Spleen (tissue), 13 donors: ENCODE measurements at regions of chr3 and their contacts with region 1.

Region 1: GRCh38 chr3:131502530-131503245 is at the start of gene MRPL3:
- DNase-seq: peak; percentile 96
- H3K4me3 ChIP-seq: peak within 1 kb of the TSS; percentile 55 to 100 (median 82)
- H3K27ac ChIP-seq: peak within 1 kb of the TSS; percentile 52 to 88 (median 76)
- H3K4me1 ChIP-seq: peaks cover 15 to 49% (median 37%) of the 10 kb centered on the region in 6 donors
- H3K27me3 ChIP-seq: peaks cover 0 to 2% (median 0%) of the 10 kb centered on the region in 7 donors
- CTCF ChIP-seq: no peak
- POLR2A ChIP-seq: no peak
- total RNA-seq, gene MRPL3: 39.9 to 60.2 (median 52.7) TPM

Region 2: DNA sequence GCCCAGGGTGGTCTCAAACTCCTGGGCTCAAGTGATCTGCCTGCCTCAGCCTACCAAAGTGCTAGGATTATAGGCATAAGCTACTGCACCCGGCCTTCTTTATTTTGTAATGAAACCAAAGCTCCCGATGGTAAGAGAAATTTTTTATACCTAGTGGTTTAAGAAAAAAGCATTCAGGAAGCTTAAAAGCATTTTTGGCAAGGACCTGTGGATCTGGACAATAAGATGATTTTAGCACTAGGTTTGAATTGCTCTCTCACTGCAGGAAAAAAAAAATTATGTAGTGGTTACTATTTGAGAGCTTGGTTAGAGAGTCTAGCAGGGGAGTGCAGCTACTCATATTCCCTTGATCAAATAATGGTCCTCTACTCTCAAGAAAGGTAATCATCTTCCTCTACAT is 691.1 kb before region 1 on chr3:
- intact Hi-C with region 1: no loop called
- DNase-seq: no peak
- H3K4me3 ChIP-seq: no peak overlapping the region
- H3K27ac ChIP-seq: no peak overlapping the region
- H3K4me1 ChIP-seq: no peaks in the 10 kb centered on the region
- H3K27me3 ChIP-seq: no peaks in the 10 kb centered on the region
- CTCF ChIP-seq: no peak
- POLR2A ChIP-seq: no peak

Region 3: GRCh38 chr3:131033480-131034080 is 469.1 kb before region 1 on chr3:
- intact Hi-C with region 1: loop called (anchors 10 kb)
- DNase-seq: no peak
- H3K4me3 ChIP-seq: no peak overlapping the region
- H3K27ac ChIP-seq: no peak overlapping the region
- H3K4me1 ChIP-seq: no peaks in the 10 kb centered on the region
- H3K27me3 ChIP-seq: no peaks in the 10 kb centered on the region
- CTCF ChIP-seq: peak in 10 of 11 experiments; percentile 21 to 75 (median 62)
- POLR2A ChIP-seq: no peak

Region 4: GRCh38 chr3:131381444-131382291 is 121.0 kb before region 1 on chr3 and contains the start of gene NUDT16:
- intact Hi-C with region 1: loop called (anchors 10 kb)
- DNase-seq: peak; percentile 100
- H3K4me3 ChIP-seq: peak within 1 kb of the TSS; percentile 55 to 98 (median 96)
- H3K27ac ChIP-seq: peak within 1 kb of the TSS; percentile 62 to 94 (median 88)
- H3K4me1 ChIP-seq: peaks cover 17 to 77% (median 53%) of the 10 kb centered on the region in 6 donors
- H3K27me3 ChIP-seq: no peaks in the 10 kb centered on the region
- CTCF ChIP-seq: peak in 6 of 11 experiments; percentile 6 to 35 (median 18)
- POLR2A ChIP-seq: peak; percentile 45 to 90 (median 55)
- total RNA-seq, gene NUDT16: 16.9 to 64.5 (median 38.1) TPM

Region 5: GRCh38 chr3:131396170-131396569 is 106.5 kb before region 1 on chr3:
- intact Hi-C with region 1: no loop called
- DNase-seq: no peak
- H3K4me3 ChIP-seq: no peak overlapping the region
- H3K27ac ChIP-seq: no peak overlapping the region
- H3K4me1 ChIP-seq: no peaks in the 10 kb centered on the region
- H3K27me3 ChIP-seq: no peaks in the 10 kb centered on the region
- CTCF ChIP-seq: no peak
- POLR2A ChIP-seq: no peak

Region 6: DNA sequence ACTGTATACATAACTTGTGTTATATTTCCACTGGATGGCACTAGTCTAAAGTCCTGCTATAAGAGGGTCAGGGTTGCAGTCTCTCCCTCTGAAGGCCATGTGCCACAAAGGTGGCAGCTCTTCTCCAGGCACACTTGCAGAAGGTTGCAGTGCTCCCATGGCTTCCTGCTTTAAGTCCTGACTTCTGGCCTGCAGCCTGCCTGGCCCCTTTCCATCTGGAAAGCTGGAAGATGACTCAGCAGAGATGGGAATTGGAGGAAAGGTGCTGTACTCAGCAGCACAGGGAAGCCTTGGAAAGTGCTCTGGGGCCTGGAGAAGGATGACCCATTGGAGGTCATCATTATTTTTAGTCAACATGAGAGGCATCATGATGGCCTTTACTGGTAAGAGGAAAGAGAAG is 41.0 kb after region 1 on chr3:
- intact Hi-C with region 1: no loop called
- DNase-seq: peak; percentile 82
- H3K4me3 ChIP-seq: no peak overlapping the region
- H3K27ac ChIP-seq: peak overlapping the region in 3 of 8 donors; percentile 38 to 61 (median 44)
- H3K4me1 ChIP-seq: no peaks in the 10 kb centered on the region
- H3K27me3 ChIP-seq: peaks cover 0 to 6% (median 0%) of the 10 kb centered on the region in 7 donors
- CTCF ChIP-seq: peak in 4 of 11 experiments; percentile 6 to 29 (median 14)
- POLR2A ChIP-seq: no peak

Region 7: GRCh38 chr3:131868203-131868602 is 365.5 kb after region 1 on chr3:
- intact Hi-C with region 1: no loop called
- DNase-seq: no peak
- H3K4me3 ChIP-seq: no peak overlapping the region
- H3K27ac ChIP-seq: no peak overlapping the region
- H3K4me1 ChIP-seq: no peaks in the 10 kb centered on the region
- H3K27me3 ChIP-seq: no peaks in the 10 kb centered on the region
- CTCF ChIP-seq: no peak
- POLR2A ChIP-seq: no peak